HepG2 (cell line): ENCODE measurements at regions of chr2 and their contacts with region 1.

Region 1: GRCh38 chr2:143110758-143111428 is 18.3 kb upstream of the ARHGAP15 start:
- DNase-seq: peak; percentile 68
- ATAC-seq: peak; percentile 90
- H3K4me3 ChIP-seq: no peak overlapping the region
- H3K27ac ChIP-seq: no peak overlapping the region
- H3K4me1 ChIP-seq: no peaks in the 10 kb centered on the region
- H3K27me3 ChIP-seq: no peaks in the 10 kb centered on the region
- CTCF ChIP-seq: peak; percentile 87
- EP300 ChIP-seq: no peak
- POLR2A ChIP-seq: no peak
- RAD21 ChIP-seq: no peak; the same call in 1 of the 2 replicates

Region 2: DNA sequence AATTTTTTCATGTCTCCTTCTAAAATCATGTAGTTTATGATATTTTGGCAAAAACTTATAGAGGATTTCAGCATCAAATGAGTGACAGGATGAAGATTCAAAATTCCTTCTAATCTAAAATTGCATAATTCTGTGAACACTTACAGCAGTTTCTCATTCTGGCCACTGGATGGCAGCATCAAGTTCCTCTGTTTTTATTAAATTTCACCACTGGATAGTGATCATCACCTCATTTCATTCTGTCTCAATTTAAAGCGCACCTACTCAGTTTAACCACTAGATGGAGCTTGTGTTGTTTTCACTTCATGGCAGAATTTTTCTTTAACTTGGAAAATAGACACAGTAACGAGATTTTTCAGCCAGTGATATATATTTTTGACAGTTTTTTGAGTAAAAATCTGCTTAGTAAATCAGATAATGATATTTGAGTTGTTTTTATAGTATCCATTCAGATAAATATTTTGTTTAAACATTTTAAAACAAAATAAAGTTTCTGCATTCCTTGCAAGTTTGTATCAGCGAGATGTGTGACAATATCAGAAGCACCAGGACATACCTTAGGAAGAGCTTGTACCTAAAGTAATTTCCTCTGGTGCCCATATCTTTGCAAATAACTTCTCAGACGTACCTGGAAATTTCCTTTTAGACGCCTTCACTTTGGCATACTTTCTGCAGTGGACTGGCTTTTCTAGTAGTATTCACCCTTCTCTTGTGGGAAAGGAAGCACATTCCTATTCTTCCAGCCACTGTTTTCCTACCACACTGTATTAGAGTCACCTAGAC is 76.4 kb before region 1 on chr2:
- CTCF ChIA-PET with region 1: no interaction called
- POLR2A ChIA-PET with region 1: no interaction called
- in situ Hi-C with region 1: no loop called
- intact Hi-C with region 1: loop called (anchors 2 kb)
- DNase-seq: peak; percentile 90
- ATAC-seq: peak; percentile 84
- H3K4me3 ChIP-seq: no peak overlapping the region
- H3K27ac ChIP-seq: no peak overlapping the region
- H3K4me1 ChIP-seq: no peaks in the 10 kb centered on the region
- H3K27me3 ChIP-seq: no peaks in the 10 kb centered on the region
- CTCF ChIP-seq: peak; percentile 83
- EP300 ChIP-seq: no peak
- POLR2A ChIP-seq: no peak
- RAD21 ChIP-seq: peak; percentile 57; the same call in 1 of the 2 replicates